ENCODE measurements at regions of chr2 and their contacts with region 1.

Region 1: DNA sequence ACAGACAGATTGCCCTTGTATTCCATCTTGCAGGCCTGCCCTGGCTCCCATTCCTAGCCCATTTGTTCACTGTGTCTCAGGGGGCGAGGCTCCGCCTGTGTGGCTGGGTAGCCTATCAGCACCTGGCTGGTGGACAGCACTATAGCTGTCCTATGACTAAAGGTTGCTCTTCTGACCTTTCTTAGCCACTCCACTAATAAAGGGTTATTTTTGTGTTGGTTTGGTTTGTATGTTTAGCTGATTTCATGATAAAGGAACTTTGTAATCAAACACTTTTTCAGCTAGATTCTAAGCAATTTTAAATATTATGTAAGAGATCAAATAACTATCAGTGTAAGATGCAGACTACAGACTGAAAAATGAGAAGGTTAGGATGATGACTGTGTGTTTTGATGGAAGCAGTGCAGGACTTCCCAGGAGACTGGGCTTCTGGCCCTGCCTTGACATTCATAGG is 72.2 kb downstream of the CRIM1 start:
- DNase-seq: peak in 1 of 2 experiments; percentile 42
- H3K4me3 ChIP-seq: no peak overlapping the region
- H3K4me3 Mint-ChIP-seq: no peak overlapping the region
- H3K27ac Mint-ChIP-seq: peak overlapping the region; percentile 47
- H3K4me1 ChIP-seq: peaks cover 34% of the 10 kb centered on the region
- H3K4me1 Mint-ChIP-seq: peaks cover 35% of the 10 kb centered on the region
- H3K27me3 ChIP-seq: no peaks in the 10 kb centered on the region
- H3K27me3 Mint-ChIP-seq: no peaks in the 10 kb centered on the region
- CTCF ChIP-seq: no peak

Region 2: DNA sequence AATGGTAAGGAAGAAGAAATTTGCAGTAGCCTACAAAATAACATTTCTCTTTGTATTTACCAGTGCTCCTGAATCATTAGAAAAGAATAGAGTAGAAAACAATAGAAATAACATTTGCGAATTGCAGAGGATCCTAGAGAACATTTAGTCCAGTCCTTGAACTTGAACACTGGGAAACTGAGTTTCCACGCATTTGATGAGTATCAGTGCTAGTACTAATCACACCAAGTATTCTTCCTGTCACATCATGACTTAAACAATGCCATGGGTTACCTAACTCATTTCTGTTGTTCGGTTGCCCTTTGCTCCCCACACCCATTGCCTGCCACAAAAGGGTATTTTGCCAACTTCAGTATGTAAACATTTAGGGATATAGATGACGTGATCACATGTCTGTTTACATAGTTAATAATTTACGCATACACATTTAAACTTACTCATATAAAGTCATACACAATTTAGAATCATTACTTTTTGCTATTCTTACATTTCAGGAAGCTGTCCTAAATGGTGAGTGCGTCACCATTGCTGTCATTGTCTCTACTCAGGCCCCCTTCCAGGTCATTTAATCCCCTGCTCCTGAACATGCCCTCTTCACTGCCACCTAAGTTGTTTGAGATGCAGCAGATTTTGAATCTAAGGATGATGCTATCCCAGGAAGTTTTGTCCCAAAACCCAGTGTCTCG is 29.9 kb before region 1 on chr2:
- CTCF ChIA-PET with region 1: no interaction called
- POLR2A ChIA-PET with region 1: no interaction called
- intact Hi-C with region 1: no loop called
- DNase-seq: no peak
- H3K4me3 ChIP-seq: no peak overlapping the region
- H3K4me3 Mint-ChIP-seq: no peak overlapping the region
- H3K27ac Mint-ChIP-seq: no peak overlapping the region
- H3K4me1 ChIP-seq: peaks cover 54% of the 10 kb centered on the region
- H3K4me1 Mint-ChIP-seq: peaks cover 10% of the 10 kb centered on the region
- H3K27me3 ChIP-seq: no peaks in the 10 kb centered on the region
- H3K27me3 Mint-ChIP-seq: no peaks in the 10 kb centered on the region
- CTCF ChIP-seq: no peak

Region 3: GRCh38 chr2:36416370-36417165 is 11.2 kb before region 1 on chr2:
- CTCF ChIA-PET with region 1: interaction called, 8 read pairs
- POLR2A ChIA-PET with region 1: no interaction called
- intact Hi-C with region 1: loop called (anchors 1 kb)
- DNase-seq: no peak
- H3K4me3 ChIP-seq: no peak overlapping the region
- H3K4me3 Mint-ChIP-seq: no peak overlapping the region
- H3K27ac Mint-ChIP-seq: peak overlapping the region; percentile 9
- H3K4me1 ChIP-seq: peaks cover 39% of the 10 kb centered on the region
- H3K4me1 Mint-ChIP-seq: peaks cover 65% of the 10 kb centered on the region
- H3K27me3 ChIP-seq: no peaks in the 10 kb centered on the region
- H3K27me3 Mint-ChIP-seq: no peaks in the 10 kb centered on the region
- CTCF ChIP-seq: no peak